Ovary (tissue), 10 donors: ENCODE measurements at regions of chr3 and their contacts with region 1.

Region 1: GRCh38 chr3:102206511-102207031 is 228.2 kb upstream of the ZPLD1 start:
- DNase-seq: peak in 4 of 5 donors; percentile 23 to 61 (median 36)
- H3K4me3 ChIP-seq: no peak overlapping the region
- H3K27ac ChIP-seq: no peak overlapping the region
- H3K4me1 ChIP-seq: no peaks in the 10 kb centered on the region
- H3K27me3 ChIP-seq: no peaks in the 10 kb centered on the region
- CTCF ChIP-seq: no peak
- EP300 ChIP-seq: no peak
- POLR2A ChIP-seq: no peak

Region 2: GRCh38 chr3:101803173-101803782 is 403.3 kb before region 1 on chr3:
- intact Hi-C with region 1: loop called in 1 of 4 experiments (anchors 1 kb)
- DNase-seq: peak in 3 of 5 donors; percentile 21 to 63 (median 30)
- H3K4me3 ChIP-seq: no peak overlapping the region
- H3K27ac ChIP-seq: no peak overlapping the region
- H3K4me1 ChIP-seq: peaks cover 2% of the 10 kb centered on the region
- H3K27me3 ChIP-seq: no peaks in the 10 kb centered on the region
- CTCF ChIP-seq: peak; percentile 42 to 74 (median 65)
- EP300 ChIP-seq: no peak
- POLR2A ChIP-seq: no peak

Region 3: DNA sequence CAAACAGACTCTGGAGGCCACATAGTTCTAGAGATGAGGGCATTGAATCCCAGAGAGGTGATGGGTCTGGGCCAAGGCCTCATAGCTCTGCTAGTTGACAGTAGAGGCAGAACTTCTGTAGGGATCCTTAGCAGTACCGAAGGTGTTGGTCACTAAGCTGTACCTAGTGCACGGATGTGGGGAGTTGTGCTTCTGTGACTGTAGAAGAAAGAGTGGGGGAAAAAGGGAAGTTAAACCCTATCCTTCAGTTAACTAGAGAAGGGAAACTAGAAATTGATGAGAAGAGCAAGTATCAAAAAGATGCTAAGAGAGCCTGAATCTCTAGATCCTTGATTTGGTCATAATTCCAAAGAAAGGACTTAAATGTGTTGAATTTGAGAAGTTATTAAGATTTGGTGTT is 170.6 kb before region 1 on chr3:
- intact Hi-C with region 1: no loop called
- DNase-seq: no peak
- H3K4me3 ChIP-seq: no peak overlapping the region
- H3K27ac ChIP-seq: no peak overlapping the region
- H3K4me1 ChIP-seq: no peaks in the 10 kb centered on the region
- H3K27me3 ChIP-seq: no peaks in the 10 kb centered on the region
- CTCF ChIP-seq: no peak
- EP300 ChIP-seq: no peak
- POLR2A ChIP-seq: no peak